ENCODE measurements at regions of chrX and their contacts with region 1.

Region 1: DNA sequence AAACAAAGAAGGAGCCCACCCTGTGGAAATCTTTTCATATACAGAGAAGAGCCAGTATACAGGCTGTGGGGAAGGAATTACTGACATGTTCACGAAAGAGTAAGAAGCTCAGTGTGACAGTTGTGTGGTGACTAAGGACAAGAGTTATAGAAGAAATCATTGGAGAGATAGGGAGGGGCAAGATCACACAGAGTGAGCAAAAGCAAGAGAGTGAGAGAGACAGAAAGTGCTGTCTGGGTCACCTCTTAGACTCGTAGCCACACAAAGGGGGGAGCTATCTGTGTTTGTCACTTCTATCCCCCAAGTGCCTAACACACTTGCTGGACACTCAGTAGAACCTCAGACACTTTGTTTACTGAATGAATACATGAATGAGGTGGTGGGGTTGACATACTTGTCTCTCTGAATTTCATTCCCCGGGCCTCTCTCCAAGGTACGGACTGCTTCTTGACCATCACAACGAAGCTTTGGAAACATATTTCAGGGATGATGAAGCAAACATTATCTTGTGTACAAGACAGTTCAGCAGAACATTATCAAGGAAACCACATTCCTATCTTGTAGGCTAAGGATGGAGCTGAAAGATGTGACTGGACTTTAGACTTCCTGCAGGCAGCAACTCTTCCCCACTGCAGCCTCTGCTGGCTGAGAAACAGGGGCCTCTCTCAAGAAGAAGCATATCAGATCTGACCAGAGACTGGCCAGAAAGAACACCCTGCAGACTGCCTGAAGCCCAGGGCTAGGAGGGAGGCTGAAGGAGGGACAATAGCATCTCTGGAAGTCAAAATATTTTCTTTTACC is 168.2 kb downstream of the AMELX start:
- DNase-seq: no peak
- ATAC-seq: peak; percentile 57
- H3K4me3 ChIP-seq: no peak overlapping the region
- H3K27ac ChIP-seq: peak overlapping the region; percentile 20 to 74
- H3K4me1 ChIP-seq: peaks cover 0 to 3% of the 10 kb centered on the region in 2 donors
- H3K27me3 ChIP-seq: no peaks in the 10 kb centered on the region

Region 2: GRCh38 chrX:11439846-11440245 is 21.6 kb before region 1 on chrX:
- intact Hi-C with region 1: loop called in 1 of 2 experiments (anchors 2 kb)
- DNase-seq: no peak
- ATAC-seq: no peak
- H3K4me3 ChIP-seq: no peak overlapping the region
- H3K27ac ChIP-seq: no peak overlapping the region
- H3K4me1 ChIP-seq: peaks cover 0 to 2% of the 10 kb centered on the region in 2 donors
- H3K27me3 ChIP-seq: no peaks in the 10 kb centered on the region